Activated CD4-positive, alpha-beta memory T cell treated with anti-CD3 and anti-CD28 coated beads, Interleukin-2, amount 10 ng/mL, durations not matched to agents 7 days and 5 days (primary cell): ENCODE measurements at regions of chr12 and their contacts with region 1.

Region 1: GRCh38 chr12:30806989-30807694 is 52.4 kb upstream of the CAPRIN2 start:
- DNase-seq: peak; percentile 24
- H3K4me3 Mint-ChIP-seq: no peak overlapping the region
- H3K27ac Mint-ChIP-seq: no peak overlapping the region
- H3K4me1 Mint-ChIP-seq: no peaks in the 10 kb centered on the region
- H3K27me3 Mint-ChIP-seq: peaks cover 20% of the 10 kb centered on the region

Region 2: DNA sequence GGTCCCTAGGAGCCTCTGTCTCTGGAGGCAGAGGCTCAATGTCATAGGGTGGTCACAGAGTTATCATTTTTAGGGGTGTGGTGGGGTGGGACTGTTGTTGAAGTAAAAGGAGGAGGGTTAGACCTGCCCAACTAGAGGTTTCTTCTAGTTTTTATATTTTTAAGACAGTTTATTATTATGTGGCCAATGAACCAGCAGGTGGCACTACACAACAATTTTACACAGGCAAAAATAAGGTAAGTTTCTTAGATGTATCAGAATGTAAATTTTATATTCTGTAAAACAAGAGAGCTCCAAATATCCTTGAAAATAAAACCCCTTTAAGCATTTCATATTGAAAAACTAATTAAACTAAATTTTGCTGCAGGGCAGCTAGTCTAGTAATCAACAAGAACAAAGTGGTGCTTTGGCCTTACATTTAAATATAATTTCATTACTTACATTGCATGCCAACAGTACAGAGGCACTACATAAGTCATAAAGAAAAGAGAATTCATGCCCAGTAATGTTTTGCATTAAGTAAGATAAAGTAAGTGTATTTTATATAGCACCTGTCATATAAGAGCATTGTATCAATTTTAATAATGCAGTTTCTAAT is 1287.5 kb before region 1 on chr12:
- CTCF ChIA-PET with region 1: interaction called, 10 read pairs
- POLR2A ChIA-PET with region 1: no interaction called
- DNase-seq: no peak
- H3K4me3 Mint-ChIP-seq: no peak overlapping the region
- H3K27ac Mint-ChIP-seq: no peak overlapping the region
- H3K4me1 Mint-ChIP-seq: no peaks in the 10 kb centered on the region
- H3K27me3 Mint-ChIP-seq: no peaks in the 10 kb centered on the region

Region 3: GRCh38 chr12:30792085-30792484 is 15.1 kb before region 1 on chr12:
- CTCF ChIA-PET with region 1: no interaction called
- POLR2A ChIA-PET with region 1: no interaction called
- DNase-seq: no peak
- H3K4me3 Mint-ChIP-seq: no peak overlapping the region
- H3K27ac Mint-ChIP-seq: no peak overlapping the region
- H3K4me1 Mint-ChIP-seq: peaks cover 24% of the 10 kb centered on the region
- H3K27me3 Mint-ChIP-seq: peaks cover 14% of the 10 kb centered on the region